Activated CD4-positive, alpha-beta T cell treated with anti-CD3 and anti-CD28 coated beads for 36 hours (primary cell): ENCODE measurements at regions of chr1 and their contacts with region 1.

Region 1: DNA sequence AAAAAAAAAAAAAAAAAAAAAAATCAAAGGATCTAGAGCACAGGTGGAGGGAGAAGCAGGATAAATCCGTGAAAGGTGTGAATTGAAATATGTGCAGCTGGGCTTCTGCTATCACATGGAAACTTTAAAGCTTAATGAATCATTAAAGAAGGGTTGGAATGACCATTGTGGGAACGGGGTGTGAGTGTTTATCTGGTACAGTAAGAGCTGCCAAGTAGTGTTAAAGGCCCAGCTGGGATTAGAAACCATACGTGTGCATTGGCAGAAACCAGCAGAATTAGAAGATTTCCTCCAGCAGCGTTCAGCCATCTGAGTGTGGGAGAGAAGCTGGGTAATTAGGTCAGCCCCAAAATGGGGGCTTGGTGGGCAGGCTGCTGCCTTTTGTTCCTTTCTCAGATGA is 13.5 kb downstream of the FALEC start:
- DNase-seq: no peak
- ATAC-seq: no peak
- H3K4me3 Mint-ChIP-seq: no peak overlapping the region
- H3K27ac Mint-ChIP-seq: no peak overlapping the region
- H3K4me1 Mint-ChIP-seq: no peaks in the 10 kb centered on the region
- H3K27me3 Mint-ChIP-seq: no peaks in the 10 kb centered on the region

Region 2: DNA sequence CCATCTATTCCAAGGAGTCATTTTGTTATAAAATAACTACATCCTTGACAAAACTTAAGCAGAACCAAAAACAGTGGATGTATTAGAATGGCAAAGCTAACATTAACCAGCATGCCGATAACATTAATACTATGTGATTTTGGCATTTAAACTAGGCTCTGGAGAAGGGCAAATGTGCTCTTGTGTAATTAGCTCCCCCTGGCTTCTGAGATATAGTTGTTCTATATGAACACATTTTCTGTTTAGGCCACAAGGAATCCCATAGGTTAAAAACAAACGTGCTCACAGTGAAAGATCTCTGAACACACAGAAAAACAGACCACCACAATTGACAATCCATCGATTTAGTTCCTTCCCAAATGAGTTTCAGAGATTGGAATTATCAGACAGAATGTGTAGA is 99.2 kb before region 1 on chr1:
- CTCF ChIA-PET with region 1: no interaction called
- POLR2A ChIA-PET with region 1: no interaction called
- intact Hi-C with region 1: no loop called
- DNase-seq: no peak
- ATAC-seq: peak; percentile 60
- H3K4me3 Mint-ChIP-seq: no peak overlapping the region
- H3K27ac Mint-ChIP-seq: peak overlapping the region; percentile 16
- H3K4me1 Mint-ChIP-seq: peaks cover 7% of the 10 kb centered on the region
- H3K27me3 Mint-ChIP-seq: no peaks in the 10 kb centered on the region

Region 3: DNA sequence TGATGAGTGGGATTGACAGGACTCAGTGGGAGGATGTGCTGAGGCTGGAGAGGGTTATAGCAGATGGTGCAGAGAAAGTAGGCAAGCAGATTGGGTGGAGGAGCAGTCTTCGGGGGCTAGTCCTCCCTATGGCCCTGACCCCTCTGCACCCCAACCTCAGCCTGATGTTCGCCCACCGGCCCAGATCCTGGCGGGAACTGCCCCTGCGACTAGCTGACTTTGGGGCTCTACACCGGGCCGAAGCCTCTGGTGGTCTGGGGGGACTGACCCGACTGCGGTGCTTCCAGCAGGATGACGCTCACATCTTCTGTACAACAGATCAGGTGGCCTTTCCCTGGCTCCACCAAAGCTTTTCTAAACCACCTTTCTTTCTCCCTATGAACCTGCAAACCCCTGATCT is 30.7 kb before region 1 on chr1:
- CTCF ChIA-PET with region 1: no interaction called
- POLR2A ChIA-PET with region 1: no interaction called
- intact Hi-C with region 1: no loop called
- DNase-seq: no peak
- ATAC-seq: no peak
- H3K4me3 Mint-ChIP-seq: no peak overlapping the region
- H3K27ac Mint-ChIP-seq: no peak overlapping the region
- H3K4me1 Mint-ChIP-seq: no peaks in the 10 kb centered on the region
- H3K27me3 Mint-ChIP-seq: no peaks in the 10 kb centered on the region

Region 4: DNA sequence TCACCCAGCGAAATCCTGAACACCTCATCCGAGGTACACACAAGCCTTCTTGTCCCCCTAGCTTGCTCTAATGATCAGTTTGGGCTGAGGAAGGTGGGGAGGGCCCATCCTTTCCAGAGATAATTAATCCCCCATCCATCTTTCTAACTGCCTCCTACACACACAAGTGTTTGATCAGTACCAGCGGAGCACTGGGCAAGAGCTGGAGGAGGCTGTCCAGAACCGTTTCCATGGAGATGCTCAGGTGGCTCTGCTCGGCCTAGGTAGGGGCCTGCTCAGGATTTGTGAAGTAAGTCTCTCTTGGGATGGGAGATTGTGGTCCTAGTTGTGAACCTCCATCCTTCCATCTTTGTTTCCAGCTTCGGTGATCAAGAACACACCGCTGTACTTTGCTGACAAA is 458.9 kb after region 1 on chr1:
- CTCF ChIA-PET with region 1: no interaction called
- POLR2A ChIA-PET with region 1: interaction called, 13 read pairs
- intact Hi-C with region 1: no loop called
- DNase-seq: no peak
- ATAC-seq: no peak
- H3K4me3 Mint-ChIP-seq: no peak overlapping the region
- H3K27ac Mint-ChIP-seq: no peak overlapping the region
- H3K4me1 Mint-ChIP-seq: no peaks in the 10 kb centered on the region
- H3K27me3 Mint-ChIP-seq: no peaks in the 10 kb centered on the region